CD14-positive monocyte (primary cell): ENCODE measurements at regions of chr2 and their contacts with region 1.

Region 1: DNA sequence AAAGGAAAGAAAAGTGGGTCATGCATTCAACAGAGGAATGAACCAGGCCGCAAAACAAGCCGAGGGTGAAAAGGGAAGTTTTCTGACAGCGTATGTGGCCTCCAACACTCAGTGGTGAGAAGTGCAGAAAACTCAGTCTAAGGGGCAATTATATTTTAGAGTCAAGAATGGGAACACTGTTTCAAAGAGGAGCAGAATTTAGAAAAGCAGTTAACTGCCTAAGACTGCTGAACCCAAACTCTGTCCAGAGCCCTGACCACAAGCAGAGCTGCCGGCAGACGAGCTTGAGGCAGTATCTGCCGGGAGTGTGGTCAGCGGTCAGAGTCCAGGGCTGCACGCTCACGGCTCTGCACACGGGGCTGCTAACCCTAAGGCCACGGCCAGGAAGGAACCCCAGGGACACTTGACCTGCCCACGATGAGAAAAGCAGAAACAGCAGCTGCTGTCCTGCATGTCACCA is 347.0 kb upstream of the ID2 start:
- DNase-seq: peak in 2 of 3 donors; percentile 30 to 31
- H3K4me3 ChIP-seq: no peak overlapping the region
- H3K4me3 Mint-ChIP-seq: no peak overlapping the region
- H3K27ac ChIP-seq: peak overlapping the region; percentile 1 to 15
- H3K27ac Mint-ChIP-seq: peak overlapping the region in 4 of 7 donors; percentile 6 to 72 (median 70)
- H3K4me1 ChIP-seq: peaks cover 20 to 34% of the 10 kb centered on the region in 2 donors
- H3K4me1 Mint-ChIP-seq: peaks cover 28% of the 10 kb centered on the region
- H3K27me3 ChIP-seq: no peaks in the 10 kb centered on the region
- H3K27me3 Mint-ChIP-seq: peaks cover 0 to 1% (median 0%) of the 10 kb centered on the region in 3 donors
- CTCF ChIP-seq: no peak

Region 2: GRCh38 chr2:8389373-8390108 is 54.6 kb after region 1 on chr2:
- intact Hi-C with region 1: loop called in 1 of 2 experiments (anchors 10 kb)
- DNase-seq: peak in 2 of 3 donors; percentile 33 to 44
- H3K4me3 ChIP-seq: no peak overlapping the region
- H3K4me3 Mint-ChIP-seq: peak overlapping the region in 1 of 2 donors; percentile 5
- H3K27ac ChIP-seq: no peak overlapping the region
- H3K27ac Mint-ChIP-seq: no peak overlapping the region
- H3K4me1 ChIP-seq: peaks cover 20 to 24% of the 10 kb centered on the region in 2 donors
- H3K4me1 Mint-ChIP-seq: peaks cover 40% of the 10 kb centered on the region
- H3K27me3 ChIP-seq: no peaks in the 10 kb centered on the region
- H3K27me3 Mint-ChIP-seq: peaks cover 0 to 4% (median 0%) of the 10 kb centered on the region in 3 donors
- CTCF ChIP-seq: no peak